ENCODE measurements at regions of chr7 and their contacts with region 1.

Region 1: DNA sequence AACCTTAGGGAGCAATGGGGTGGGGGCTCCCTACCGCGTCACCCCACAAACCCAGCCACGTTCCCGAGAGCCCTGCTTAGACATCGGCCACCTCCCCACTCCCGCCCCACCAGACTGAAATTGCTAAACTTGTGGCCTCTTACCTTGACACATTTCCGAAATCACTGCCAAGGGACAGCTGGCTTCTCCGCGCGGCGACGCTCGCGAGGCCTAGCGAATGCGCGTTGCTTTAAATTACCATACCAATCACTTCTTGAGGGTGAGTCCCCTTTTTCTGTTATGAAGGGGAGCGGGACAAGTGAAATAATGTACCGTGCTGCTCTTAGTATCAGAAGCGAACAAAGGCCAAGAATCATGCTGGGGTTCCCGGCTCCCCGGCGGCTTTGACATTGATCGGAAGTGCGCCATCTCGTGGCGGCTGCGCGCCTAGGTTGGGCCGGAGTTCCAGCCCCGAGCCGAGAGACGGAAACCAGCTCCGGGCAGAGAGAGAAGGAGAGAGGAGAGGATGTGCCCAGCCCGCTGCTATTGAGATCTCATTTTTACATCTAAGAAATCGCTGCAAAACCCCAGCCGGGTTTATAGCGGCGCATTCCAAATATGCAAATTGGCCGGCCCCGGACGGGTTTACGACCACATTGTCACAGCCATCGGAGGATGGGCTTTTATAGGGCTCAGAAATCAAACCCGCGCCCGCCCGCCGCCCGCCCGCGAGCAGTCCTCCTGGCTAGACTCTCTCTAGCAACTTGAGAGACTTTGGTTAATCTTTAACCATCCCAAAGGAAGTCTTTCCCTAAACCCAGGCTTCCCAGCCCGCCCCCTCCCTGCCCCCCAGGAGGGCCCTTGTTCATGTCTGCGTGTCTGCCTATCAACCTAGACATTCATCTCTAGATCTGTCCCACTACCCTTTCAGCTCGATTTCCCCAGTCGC is 5.3 kb downstream of the HOXA11 start:
- DNase-seq: peak in 6 of 7 donors; percentile 53 to 75 (median 71)
- H3K4me3 ChIP-seq: no peak overlapping the region
- H3K27ac ChIP-seq: no peak overlapping the region
- H3K4me1 ChIP-seq: peaks cover 16 to 18% of the 10 kb centered on the region in 2 donors
- H3K27me3 ChIP-seq: peaks cover 73% of the 10 kb centered on the region
- CTCF ChIP-seq: peak; percentile 55 to 84 (median 68)
- POLR2A ChIP-seq: no peak

Region 2: GRCh38 chr7:25877802-25878789 is 1301.7 kb before region 1 on chr7:
- intact Hi-C with region 1: loop called in 1 of 2 experiments (anchors 10 kb)
- DNase-seq: no peak
- H3K4me3 ChIP-seq: no peak overlapping the region
- H3K27ac ChIP-seq: no peak overlapping the region
- H3K4me1 ChIP-seq: no peaks in the 10 kb centered on the region
- H3K27me3 ChIP-seq: peaks cover 7% of the 10 kb centered on the region
- CTCF ChIP-seq: no peak
- POLR2A ChIP-seq: no peak

Region 3: GRCh38 chr7:26805045-26805444 is 374.7 kb before region 1 on chr7:
- intact Hi-C with region 1: no loop called
- DNase-seq: no peak
- H3K4me3 ChIP-seq: no peak overlapping the region
- H3K27ac ChIP-seq: no peak overlapping the region
- H3K4me1 ChIP-seq: no peaks in the 10 kb centered on the region
- H3K27me3 ChIP-seq: no peaks in the 10 kb centered on the region
- CTCF ChIP-seq: no peak
- POLR2A ChIP-seq: no peak

Region 4: GRCh38 chr7:27576360-27576944 is 396.7 kb after region 1 on chr7:
- intact Hi-C with region 1: no loop called
- DNase-seq: no peak
- H3K4me3 ChIP-seq: no peak overlapping the region
- H3K27ac ChIP-seq: no peak overlapping the region
- H3K4me1 ChIP-seq: no peaks in the 10 kb centered on the region
- H3K27me3 ChIP-seq: no peaks in the 10 kb centered on the region
- CTCF ChIP-seq: peak; percentile 36 to 76 (median 60)
- POLR2A ChIP-seq: no peak